Activated CD4-positive, alpha-beta T cell treated with anti-CD3 and anti-CD28 coated beads for 36 hours (primary cell): ENCODE measurements at regions of chr2 and their contacts with region 1.

Region 1: DNA sequence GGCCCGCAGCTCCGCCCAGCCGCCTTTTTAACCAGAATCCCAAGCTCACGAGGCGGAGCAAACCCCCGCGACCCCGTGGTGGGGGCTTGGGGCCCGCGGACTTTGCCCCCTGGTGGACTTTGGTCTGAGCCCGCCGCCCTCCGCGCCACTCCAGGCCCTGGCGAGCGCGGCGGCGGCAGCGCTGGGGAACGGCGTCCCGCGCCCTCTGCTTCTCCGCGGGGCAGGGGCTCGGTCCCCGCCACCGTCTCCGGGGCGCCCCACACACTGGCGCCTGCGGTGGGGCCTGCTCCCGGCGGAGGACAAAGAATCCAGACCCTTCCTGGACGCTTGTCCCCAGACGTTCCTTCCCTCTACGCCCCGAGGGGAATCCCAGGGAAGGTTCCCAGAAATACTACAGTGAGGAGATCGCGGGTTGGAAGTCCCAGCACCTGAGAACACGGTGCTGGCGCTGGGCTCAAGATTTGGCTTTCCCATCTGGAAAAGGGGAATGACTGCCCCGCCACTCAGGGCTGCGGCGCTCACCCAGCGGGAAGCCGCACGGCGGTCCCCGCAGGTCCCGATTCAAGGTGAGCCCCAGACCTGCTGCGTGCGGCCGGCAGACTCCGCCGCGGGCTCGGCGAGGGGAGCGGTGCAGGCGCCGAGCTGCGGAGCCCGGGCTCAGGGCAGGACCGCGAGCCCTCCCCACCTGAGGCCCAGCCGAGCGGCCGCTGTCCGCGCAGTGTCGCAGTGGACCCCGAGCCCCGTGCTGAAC is at the start of gene HAAO:
- DNase-seq: peak; percentile 30
- ATAC-seq: peak; percentile 50
- H3K4me3 Mint-ChIP-seq: peak within 1 kb of the TSS; percentile 70
- H3K27ac Mint-ChIP-seq: peak within 1 kb of the TSS; percentile 66
- H3K4me1 Mint-ChIP-seq: peaks cover 37% of the 10 kb centered on the region
- H3K27me3 Mint-ChIP-seq: peaks cover 39% of the 10 kb centered on the region
- total RNA-seq, gene HAAO: 0.86 to 1.2 TPM

Region 2: DNA sequence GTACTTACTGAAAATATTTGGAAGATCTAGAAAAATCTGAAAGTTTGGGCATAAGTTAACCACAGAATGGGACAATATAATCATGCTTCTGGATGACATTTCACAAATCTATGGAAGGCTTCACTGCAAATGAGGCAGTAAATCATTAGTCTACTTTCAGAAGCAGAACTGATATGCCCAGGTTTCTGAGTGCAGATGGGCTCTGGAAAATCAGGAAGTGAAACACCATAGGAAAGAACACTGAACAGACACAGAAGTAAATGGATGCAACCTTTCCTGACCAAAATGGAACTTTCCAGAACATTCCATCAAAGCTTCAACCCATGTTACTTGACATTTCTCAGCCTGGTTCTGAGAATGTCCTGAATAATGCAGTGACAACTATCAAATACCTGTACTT is 354.1 kb before region 1 on chr2:
- CTCF ChIA-PET with region 1: no interaction called
- POLR2A ChIA-PET with region 1: no interaction called
- intact Hi-C with region 1: no loop called
- DNase-seq: no peak
- ATAC-seq: no peak
- H3K4me3 Mint-ChIP-seq: no peak overlapping the region
- H3K27ac Mint-ChIP-seq: no peak overlapping the region
- H3K4me1 Mint-ChIP-seq: no peaks in the 10 kb centered on the region
- H3K27me3 Mint-ChIP-seq: no peaks in the 10 kb centered on the region

Region 3: GRCh38 chr2:42754021-42754775 is 38.6 kb before region 1 on chr2:
- CTCF ChIA-PET with region 1: interaction called, 3 read pairs
- POLR2A ChIA-PET with region 1: no interaction called
- intact Hi-C with region 1: loop called in 1 of 2 experiments (anchors 2 kb)
- DNase-seq: no peak
- ATAC-seq: peak; percentile 35
- H3K4me3 Mint-ChIP-seq: no peak overlapping the region
- H3K27ac Mint-ChIP-seq: no peak overlapping the region
- H3K4me1 Mint-ChIP-seq: peaks cover 18% of the 10 kb centered on the region
- H3K27me3 Mint-ChIP-seq: no peaks in the 10 kb centered on the region